ENCODE measurements at regions of chr10 and their contacts with region 1.

Region 1: GRCh38 chr10:63157845-63158624 is 24.9 kb downstream of the NRBF2 start:
- DNase-seq: no peak
- H3K4me3 ChIP-seq: no peak overlapping the region
- H3K27ac ChIP-seq: no peak overlapping the region
- H3K4me1 ChIP-seq: no peaks in the 10 kb centered on the region
- H3K27me3 ChIP-seq: no peaks in the 10 kb centered on the region
- CTCF ChIP-seq: peak; percentile 70 to 85 (median 74)

Region 2: GRCh38 chr10:62437696-62438095 is 720.3 kb before region 1 on chr10:
- intact Hi-C with region 1: loop called (anchors 5 kb)
- DNase-seq: no peak
- H3K4me3 ChIP-seq: no peak overlapping the region
- H3K27ac ChIP-seq: no peak overlapping the region
- H3K4me1 ChIP-seq: peaks cover 0 to 5% of the 10 kb centered on the region in 2 donors
- H3K27me3 ChIP-seq: no peaks in the 10 kb centered on the region
- CTCF ChIP-seq: peak; percentile 63 to 79 (median 69)

Region 3: DNA sequence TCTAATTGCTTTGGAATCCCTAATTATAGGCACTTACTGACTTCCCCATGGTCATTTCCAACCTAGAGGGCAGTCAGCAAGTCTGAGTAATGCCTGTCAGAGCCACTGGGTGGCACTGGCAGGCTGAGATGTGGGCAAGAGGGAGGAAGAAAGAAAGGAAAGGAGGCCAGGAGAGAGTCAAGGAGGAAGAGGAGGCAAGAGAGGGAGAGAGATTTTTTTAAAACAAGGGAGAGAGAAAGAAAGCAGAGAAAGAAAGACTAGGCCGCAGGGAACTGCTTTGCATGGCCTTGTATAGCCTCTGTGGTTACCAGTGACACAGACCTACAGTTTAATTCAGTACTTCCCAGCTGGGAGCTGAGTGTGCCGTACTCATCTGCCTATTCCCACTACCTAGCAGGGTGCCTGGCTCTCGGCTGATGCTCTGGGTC is 563.9 kb before region 1 on chr10:
- intact Hi-C with region 1: loop called (anchors 2 kb)
- DNase-seq: no peak
- H3K4me3 ChIP-seq: no peak overlapping the region
- H3K27ac ChIP-seq: no peak overlapping the region
- H3K4me1 ChIP-seq: no peaks in the 10 kb centered on the region
- H3K27me3 ChIP-seq: no peaks in the 10 kb centered on the region
- CTCF ChIP-seq: peak; percentile 72 to 80 (median 72)

Region 4: GRCh38 chr10:63003816-63004453 is 154.1 kb before region 1 on chr10:
- intact Hi-C with region 1: loop called (anchors 10 kb)
- DNase-seq: no peak
- H3K4me3 ChIP-seq: no peak overlapping the region
- H3K27ac ChIP-seq: no peak overlapping the region
- H3K4me1 ChIP-seq: no peaks in the 10 kb centered on the region
- H3K27me3 ChIP-seq: no peaks in the 10 kb centered on the region
- CTCF ChIP-seq: no peak

Region 5: DNA sequence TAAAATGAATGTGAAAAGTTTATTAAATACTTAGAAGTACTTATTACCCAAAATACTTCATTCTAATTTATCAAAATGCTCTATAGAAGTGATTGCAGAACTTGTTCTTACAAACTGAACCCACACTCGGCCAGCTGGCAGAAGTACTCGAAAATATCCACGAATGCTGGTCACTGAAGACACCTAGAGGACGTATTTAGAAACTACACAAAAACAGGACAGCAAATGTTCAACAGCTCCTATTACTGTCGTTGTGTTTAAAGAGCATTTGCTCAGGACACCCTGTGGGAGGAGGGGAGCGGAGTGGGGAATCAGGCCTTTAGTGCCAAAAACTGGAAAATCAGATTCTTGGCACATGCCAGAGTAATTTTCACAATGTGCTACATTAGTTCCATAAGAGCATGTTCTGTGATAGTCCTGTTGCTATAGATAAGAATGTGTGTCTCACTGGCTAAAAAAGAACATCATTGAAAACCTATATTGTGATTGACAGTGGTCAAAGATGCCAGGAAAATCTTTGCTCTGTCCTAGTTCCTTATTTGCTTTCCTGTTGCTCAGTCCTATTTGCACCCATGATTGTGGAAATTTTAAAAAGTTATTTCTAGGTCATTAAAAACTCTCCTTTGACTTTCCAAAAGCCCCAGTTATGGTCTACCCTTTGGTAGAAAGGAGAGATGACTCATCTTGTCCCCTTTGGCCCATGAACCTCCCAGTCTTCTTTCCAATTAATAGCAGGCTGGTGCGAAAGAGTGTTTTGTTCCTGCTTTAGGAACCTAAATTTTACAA is 73.9 kb before region 1 on chr10:
- intact Hi-C with region 1: no loop called
- DNase-seq: peak in 1 of 2 donors; percentile 71
- H3K4me3 ChIP-seq: no peak overlapping the region
- H3K27ac ChIP-seq: peak overlapping the region in 1 of 2 donors; percentile 6
- H3K4me1 ChIP-seq: peaks cover 0 to 8% of the 10 kb centered on the region in 2 donors
- H3K27me3 ChIP-seq: no peaks in the 10 kb centered on the region
- CTCF ChIP-seq: peak; percentile 51 to 73 (median 59)